CD8-positive, alpha-beta T cell (primary cell): ENCODE measurements at regions of chr5 and their contacts with region 1.

Region 1: DNA sequence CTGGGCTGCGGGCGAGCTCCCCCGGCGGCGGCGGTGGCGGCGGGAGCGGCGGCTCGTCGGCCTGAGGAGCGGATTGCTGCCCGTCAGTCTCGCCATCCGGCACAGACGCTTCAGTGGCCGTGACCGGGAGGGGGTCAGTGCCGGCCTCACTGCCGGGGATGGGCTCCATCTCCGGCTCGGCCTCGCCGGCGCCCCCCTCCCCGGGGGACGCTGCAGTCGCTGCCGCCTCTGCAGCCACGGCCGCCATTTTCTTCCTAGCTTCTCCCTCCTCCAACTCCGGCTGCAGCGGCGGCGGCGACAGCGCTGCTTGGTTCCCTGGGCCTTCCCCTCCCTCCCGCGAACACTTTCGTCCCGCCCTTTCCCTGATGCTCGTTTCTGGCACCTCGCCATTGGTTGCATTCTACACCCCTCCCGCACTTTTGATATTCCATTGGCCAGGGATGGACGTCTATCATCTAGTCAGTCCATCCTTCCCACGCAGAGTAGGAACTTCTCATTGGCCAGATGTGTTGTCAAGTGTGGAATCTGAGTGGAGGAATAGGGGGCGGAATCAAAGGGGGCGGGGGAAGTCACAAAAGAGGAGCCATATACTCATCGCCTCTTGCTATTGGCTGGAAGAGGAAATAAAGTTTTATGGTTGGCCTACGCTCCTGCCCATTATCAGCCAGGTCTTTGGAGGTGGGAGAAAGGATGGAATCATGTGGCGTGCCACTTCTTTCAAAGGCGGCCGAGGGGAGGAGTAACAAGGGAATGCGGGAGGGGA is at the start of gene PWWP2A:
- DNase-seq: peak; percentile 94 to 100 (median 97)
- ATAC-seq: peak; percentile 92
- H3K4me3 ChIP-seq: peak within 1 kb of the TSS; percentile 69 to 90
- H3K4me3 Mint-ChIP-seq: peak within 1 kb of the TSS; percentile 90
- H3K27ac ChIP-seq: peak within 1 kb of the TSS; percentile 70 to 78
- H3K27ac Mint-ChIP-seq: peak within 1 kb of the TSS; percentile 90
- H3K4me1 ChIP-seq: peaks cover 7% of the 10 kb centered on the region
- H3K4me1 Mint-ChIP-seq: peaks cover 18% of the 10 kb centered on the region
- H3K27me3 ChIP-seq: no peaks in the 10 kb centered on the region
- H3K27me3 Mint-ChIP-seq: no peaks in the 10 kb centered on the region
- CTCF ChIP-seq: no peak
- total RNA-seq, gene PWWP2A: 18.1 to 18.4 TPM

Region 2: GRCh38 chr5:159262859-159263567 is 856.3 kb before region 1 on chr5 and contains the start of gene UBLCP1:
- CTCF ChIA-PET with region 1: no interaction called
- POLR2A ChIA-PET with region 1: no interaction called
- intact Hi-C with region 1: loop called (anchors 2 to 5 kb)
- DNase-seq: peak; percentile 57 to 92 (median 80)
- ATAC-seq: peak; percentile 86
- H3K4me3 ChIP-seq: peak within 1 kb of the TSS; percentile 89 to 96
- H3K4me3 Mint-ChIP-seq: peak within 1 kb of the TSS; percentile 92
- H3K27ac ChIP-seq: peak within 1 kb of the TSS; percentile 97 to 99
- H3K27ac Mint-ChIP-seq: peak within 1 kb of the TSS; percentile 99
- H3K4me1 ChIP-seq: peaks cover 21% of the 10 kb centered on the region
- H3K4me1 Mint-ChIP-seq: peaks cover 55% of the 10 kb centered on the region
- H3K27me3 ChIP-seq: no peaks in the 10 kb centered on the region
- H3K27me3 Mint-ChIP-seq: no peaks in the 10 kb centered on the region
- CTCF ChIP-seq: no peak
- total RNA-seq, gene UBLCP1: 16.4 to 19.6 TPM

Region 3: GRCh38 chr5:159412284-159413046 is 706.9 kb before region 1 on chr5:
- CTCF ChIA-PET with region 1: no interaction called
- POLR2A ChIA-PET with region 1: interaction called, 3 read pairs
- intact Hi-C with region 1: loop called in 1 of 2 experiments (anchors 5 kb)
- DNase-seq: peak; percentile 49 to 94 (median 65)
- ATAC-seq: peak; percentile 90
- H3K4me3 ChIP-seq: no peak overlapping the region
- H3K4me3 Mint-ChIP-seq: peak overlapping the region; percentile 9
- H3K27ac ChIP-seq: peak overlapping the region; percentile 13 to 47
- H3K27ac Mint-ChIP-seq: peak overlapping the region; percentile 68
- H3K4me1 ChIP-seq: peaks cover 26% of the 10 kb centered on the region
- H3K4me1 Mint-ChIP-seq: peaks cover 40% of the 10 kb centered on the region
- H3K27me3 ChIP-seq: no peaks in the 10 kb centered on the region
- H3K27me3 Mint-ChIP-seq: no peaks in the 10 kb centered on the region
- CTCF ChIP-seq: no peak

Region 4: GRCh38 chr5:160008877-160009590 is 110.3 kb before region 1 on chr5 and contains the start of gene TTC1:
- CTCF ChIA-PET with region 1: no interaction called
- POLR2A ChIA-PET with region 1: interaction called, 8 read pairs
- intact Hi-C with region 1: loop called (anchors 1 kb)
- DNase-seq: peak; percentile 82 to 99 (median 93)
- ATAC-seq: peak; percentile 96
- H3K4me3 ChIP-seq: peak within 1 kb of the TSS; percentile 84 to 92
- H3K4me3 Mint-ChIP-seq: peak within 1 kb of the TSS; percentile 99
- H3K27ac ChIP-seq: peak within 1 kb of the TSS; percentile 86 to 89
- H3K27ac Mint-ChIP-seq: peak within 1 kb of the TSS; percentile 99
- H3K4me1 ChIP-seq: peaks cover 25% of the 10 kb centered on the region
- H3K4me1 Mint-ChIP-seq: peaks cover 31% of the 10 kb centered on the region
- H3K27me3 ChIP-seq: peaks cover 0 to 2% of the 10 kb centered on the region in 2 experiments
- H3K27me3 Mint-ChIP-seq: no peaks in the 10 kb centered on the region
- CTCF ChIP-seq: no peak
- total RNA-seq, gene TTC1: 12.6 to 14.3 TPM

Region 5: GRCh38 chr5:160021831-160022446 is 97.4 kb before region 1 on chr5:
- CTCF ChIA-PET with region 1: interaction called, 7 read pairs
- POLR2A ChIA-PET with region 1: no interaction called
- intact Hi-C with region 1: loop called in 1 of 2 experiments (anchors 5 kb)
- DNase-seq: peak; percentile 4 to 80 (median 53)
- ATAC-seq: peak; percentile 91
- H3K4me3 ChIP-seq: no peak overlapping the region
- H3K4me3 Mint-ChIP-seq: no peak overlapping the region
- H3K27ac ChIP-seq: no peak overlapping the region
- H3K27ac Mint-ChIP-seq: peak overlapping the region; percentile 42
- H3K4me1 ChIP-seq: peaks cover 3% of the 10 kb centered on the region
- H3K4me1 Mint-ChIP-seq: peaks cover 35% of the 10 kb centered on the region
- H3K27me3 ChIP-seq: no peaks in the 10 kb centered on the region
- H3K27me3 Mint-ChIP-seq: no peaks in the 10 kb centered on the region
- CTCF ChIP-seq: peak; percentile 91

Region 6: DNA sequence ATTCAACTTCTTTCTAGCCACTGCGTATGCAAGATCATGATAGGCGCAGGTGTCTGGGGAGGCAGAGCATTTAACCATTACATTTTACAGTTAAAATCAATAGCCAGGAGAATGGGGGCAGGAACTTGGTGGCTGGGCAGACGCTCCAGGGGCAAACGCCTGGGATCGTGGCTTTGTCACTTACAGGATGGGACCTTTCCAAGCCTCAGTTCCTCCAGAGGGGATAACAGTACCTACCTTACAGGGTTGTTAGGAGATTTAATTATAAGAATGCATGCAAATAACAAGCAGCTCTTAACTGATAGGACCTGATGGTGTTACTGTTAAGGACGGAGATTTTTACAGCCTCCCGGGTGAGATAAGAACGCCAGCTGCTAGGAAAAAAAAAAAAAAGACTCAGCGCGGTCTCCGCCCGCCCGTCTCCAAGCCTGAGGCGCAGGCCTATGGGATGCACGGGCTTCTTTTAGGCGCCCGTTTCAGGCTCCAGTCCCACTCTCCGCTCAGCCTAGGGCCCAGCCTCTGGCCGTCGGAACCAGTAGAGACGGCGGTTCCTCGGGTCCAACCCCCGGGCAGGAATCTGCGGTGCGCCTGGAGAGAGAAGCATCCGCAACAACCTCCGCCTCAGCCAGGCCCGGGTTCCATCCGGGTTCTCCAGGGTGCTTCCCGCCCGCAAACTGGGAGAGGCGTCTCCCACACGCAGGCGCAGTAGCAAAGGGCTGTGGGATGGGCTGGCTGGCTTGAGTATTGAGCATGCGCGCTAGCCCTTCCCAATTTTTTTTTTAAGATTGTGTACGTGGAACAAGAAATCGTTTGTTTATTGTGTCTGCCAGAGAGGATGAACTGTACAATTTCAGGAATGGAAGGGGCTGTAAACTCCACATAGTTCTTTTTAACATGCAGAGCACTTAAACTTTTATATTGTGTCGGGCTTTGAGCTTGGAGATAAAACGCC is 280.4 kb after region 1 on chr5 and contains the start of gene FAM200C:
- CTCF ChIA-PET with region 1: no interaction called
- POLR2A ChIA-PET with region 1: no interaction called
- intact Hi-C with region 1: loop called in 1 of 2 experiments (anchors 5 kb)
- DNase-seq: peak; percentile 15 to 85 (median 57)
- ATAC-seq: peak; percentile 73
- H3K4me3 ChIP-seq: peak within 1 kb of the TSS; percentile 60 to 86
- H3K4me3 Mint-ChIP-seq: peak within 1 kb of the TSS; percentile 91
- H3K27ac ChIP-seq: peak within 1 kb of the TSS; percentile 27 to 54
- H3K27ac Mint-ChIP-seq: peak within 1 kb of the TSS; percentile 57
- H3K4me1 ChIP-seq: peaks cover 7% of the 10 kb centered on the region
- H3K4me1 Mint-ChIP-seq: peaks cover 18% of the 10 kb centered on the region
- H3K27me3 ChIP-seq: no peaks in the 10 kb centered on the region
- H3K27me3 Mint-ChIP-seq: no peaks in the 10 kb centered on the region
- CTCF ChIP-seq: no peak
- total RNA-seq, gene FAM200C: 0.14 TPM in 1 of 2 experiments, not detected in the other

Region 7: DNA sequence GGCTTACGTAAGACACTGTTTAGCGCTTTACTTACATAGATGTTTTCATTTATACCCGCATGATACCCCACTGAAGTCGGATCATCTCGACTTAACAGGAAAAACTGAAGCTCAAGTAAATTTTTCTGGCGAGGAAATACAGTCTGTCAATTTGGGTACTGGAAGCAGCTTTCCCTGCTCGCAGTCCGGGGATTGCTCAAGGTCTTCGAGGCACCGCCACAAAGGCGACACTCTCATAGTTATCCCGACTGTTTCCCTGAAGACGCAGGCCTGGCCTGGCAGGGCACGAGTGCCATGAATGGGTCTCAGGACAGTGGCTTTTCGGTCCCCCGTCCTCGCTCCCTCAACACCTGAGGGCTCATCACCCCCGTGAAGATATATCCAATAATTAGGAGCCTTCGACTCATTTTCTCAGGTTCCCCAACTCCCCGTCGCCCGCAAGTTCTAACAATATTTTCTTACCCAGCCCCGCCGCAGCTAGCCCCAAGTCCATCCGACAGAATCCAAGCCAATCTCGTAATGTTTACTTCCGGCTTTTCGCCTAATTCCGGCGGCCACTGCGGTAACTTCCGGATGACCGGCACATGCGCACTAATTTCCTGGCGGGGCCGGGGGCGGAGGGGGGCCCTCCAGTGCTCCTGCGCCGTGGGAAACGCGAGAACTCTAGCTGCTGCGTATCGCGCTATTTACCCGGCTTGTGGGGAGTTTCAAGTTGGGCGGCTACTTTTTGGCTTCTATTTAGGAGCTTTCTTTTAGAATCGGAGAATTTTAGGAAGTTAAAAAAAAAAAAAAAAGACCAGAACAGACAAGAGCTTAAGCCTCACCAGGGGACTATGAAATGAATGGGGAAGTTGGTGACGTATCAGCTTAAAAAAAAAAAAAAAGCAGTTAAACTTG is 299.5 kb after region 1 on chr5 and contains the start of gene SLU7:
- CTCF ChIA-PET with region 1: no interaction called
- POLR2A ChIA-PET with region 1: no interaction called
- intact Hi-C with region 1: loop called (anchors 1 to 2 kb)
- DNase-seq: peak; percentile 88 to 96 (median 92)
- ATAC-seq: peak; percentile 79
- H3K4me3 ChIP-seq: peak within 1 kb of the TSS; percentile 59 to 95
- H3K4me3 Mint-ChIP-seq: peak within 1 kb of the TSS; percentile 95
- H3K27ac ChIP-seq: peak within 1 kb of the TSS; percentile 81 to 93
- H3K27ac Mint-ChIP-seq: peak within 1 kb of the TSS; percentile 98
- H3K4me1 ChIP-seq: peaks cover 32% of the 10 kb centered on the region
- H3K4me1 Mint-ChIP-seq: peaks cover 76% of the 10 kb centered on the region
- H3K27me3 ChIP-seq: no peaks in the 10 kb centered on the region
- H3K27me3 Mint-ChIP-seq: no peaks in the 10 kb centered on the region
- CTCF ChIP-seq: no peak
- total RNA-seq, gene SLU7: 127 to 136 TPM

Region 8: GRCh38 chr5:160685695-160686094 is 566.4 kb after region 1 on chr5:
- CTCF ChIA-PET with region 1: no interaction called
- POLR2A ChIA-PET with region 1: no interaction called
- intact Hi-C with region 1: no loop called
- DNase-seq: peak in 1 of 9 experiments; percentile 7
- ATAC-seq: no peak
- H3K4me3 ChIP-seq: no peak overlapping the region
- H3K4me3 Mint-ChIP-seq: no peak overlapping the region
- H3K27ac ChIP-seq: no peak overlapping the region
- H3K27ac Mint-ChIP-seq: no peak overlapping the region
- H3K4me1 ChIP-seq: no peaks in the 10 kb centered on the region
- H3K4me1 Mint-ChIP-seq: no peaks in the 10 kb centered on the region
- H3K27me3 ChIP-seq: no peaks in the 10 kb centered on the region
- H3K27me3 Mint-ChIP-seq: peaks cover 5% of the 10 kb centered on the region
- CTCF ChIP-seq: no peak